Motor neuron (in vitro differentiated cells): ENCODE measurements at regions of chr9 and their contacts with region 1.

Region 1: GRCh38 chr9:19799784-19800183 is 10.9 kb upstream of the SLC24A2 start:
- ATAC-seq: peak in 1 of 8 experiments; percentile 41
- H3K4me3 ChIP-seq: no peak overlapping the region
- H3K27ac ChIP-seq: no peak overlapping the region
- H3K4me1 ChIP-seq: peaks cover 4 to 16% of the 10 kb centered on the region in 2 donors

Region 2: GRCh38 chr9:19720377-19720776 is 79.4 kb before region 1 on chr9:
- in situ Hi-C with region 1: loop called in 1 of 9 experiments (anchors 25 kb)
- ATAC-seq: peak in 4 of 8 experiments; percentile 31 to 70 (median 49)
- H3K4me3 ChIP-seq: no peak overlapping the region
- H3K27ac ChIP-seq: no peak overlapping the region
- H3K4me1 ChIP-seq: no peaks in the 10 kb centered on the region

Region 3: GRCh38 chr9:19934301-19934868 is 134.6 kb after region 1 on chr9:
- in situ Hi-C with region 1: no loop called
- ATAC-seq: peak in 3 of 8 experiments; percentile 75 to 97 (median 84)
- H3K4me3 ChIP-seq: no peak overlapping the region
- H3K27ac ChIP-seq: no peak overlapping the region
- H3K4me1 ChIP-seq: peaks cover 0 to 6% of the 10 kb centered on the region in 2 donors

Region 4: GRCh38 chr9:19985081-19985480 is 185.3 kb after region 1 on chr9:
- in situ Hi-C with region 1: no loop called
- ATAC-seq: no peak
- H3K4me3 ChIP-seq: no peak overlapping the region
- H3K27ac ChIP-seq: no peak overlapping the region
- H3K4me1 ChIP-seq: peaks cover 0 to 8% of the 10 kb centered on the region in 2 donors